ENCODE measurements at regions of chr10 and their contacts with region 1.

Region 1: DNA sequence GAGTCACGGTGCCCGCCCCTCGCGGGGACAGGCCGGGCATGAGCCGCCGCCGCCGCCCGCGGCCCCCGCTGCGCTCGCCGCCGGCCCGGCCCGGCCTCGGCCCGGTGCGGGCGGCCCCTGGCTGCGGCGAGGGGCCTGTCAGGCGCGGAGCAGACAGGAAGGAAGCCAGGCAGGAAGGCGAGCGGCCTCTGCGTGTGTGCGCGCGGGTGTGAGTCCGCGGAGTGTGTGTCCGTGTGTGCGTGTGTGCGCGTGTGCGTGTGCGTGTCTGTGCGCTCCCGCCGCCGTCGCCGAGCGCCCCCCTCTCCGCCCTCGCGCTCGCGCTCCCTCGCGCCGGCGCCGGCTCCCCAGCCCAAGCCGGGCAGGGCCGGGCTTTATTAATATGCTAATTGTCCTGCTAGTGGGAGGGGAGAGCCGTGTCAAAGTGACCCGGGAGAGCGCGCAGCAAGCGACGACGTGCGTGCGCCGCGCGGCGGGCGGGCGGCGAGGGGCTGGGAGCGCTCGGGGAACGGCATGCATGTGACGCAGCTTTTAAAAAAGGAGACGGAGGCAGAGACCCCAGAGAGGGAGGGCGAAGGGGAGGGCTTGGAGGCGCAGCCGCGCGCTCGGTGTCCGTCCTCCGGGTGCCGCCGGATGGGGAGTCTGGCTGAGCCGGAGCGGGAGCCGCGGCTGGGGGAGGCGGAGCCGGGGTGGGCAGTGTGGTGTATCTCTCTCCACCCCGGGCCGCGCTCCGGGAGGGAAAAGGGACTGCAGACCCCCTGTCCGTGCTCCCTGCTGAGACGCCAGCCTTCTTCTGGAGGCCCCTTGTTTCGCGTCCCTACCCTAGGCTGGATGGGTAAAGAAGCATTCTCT is at the start of gene LDB1:
- DNase-seq: peak; percentile 77
- ATAC-seq: peak; percentile 45
- H3K4me3 ChIP-seq: peak within 1 kb of the TSS; percentile 89
- H3K27ac ChIP-seq: peak within 1 kb of the TSS; percentile 91
- H3K4me1 ChIP-seq: peaks cover 30% of the 10 kb centered on the region
- H3K27me3 ChIP-seq: no peaks in the 10 kb centered on the region
- CTCF ChIP-seq: no peak
- POLR2A ChIP-seq: peak; percentile 37; the same call in 1 of the 2 replicates
- RAD21 ChIP-seq: no peak
- total RNA-seq, gene LDB1: 45.3 and 47.9 TPM in 2 replicates

Region 2: DNA sequence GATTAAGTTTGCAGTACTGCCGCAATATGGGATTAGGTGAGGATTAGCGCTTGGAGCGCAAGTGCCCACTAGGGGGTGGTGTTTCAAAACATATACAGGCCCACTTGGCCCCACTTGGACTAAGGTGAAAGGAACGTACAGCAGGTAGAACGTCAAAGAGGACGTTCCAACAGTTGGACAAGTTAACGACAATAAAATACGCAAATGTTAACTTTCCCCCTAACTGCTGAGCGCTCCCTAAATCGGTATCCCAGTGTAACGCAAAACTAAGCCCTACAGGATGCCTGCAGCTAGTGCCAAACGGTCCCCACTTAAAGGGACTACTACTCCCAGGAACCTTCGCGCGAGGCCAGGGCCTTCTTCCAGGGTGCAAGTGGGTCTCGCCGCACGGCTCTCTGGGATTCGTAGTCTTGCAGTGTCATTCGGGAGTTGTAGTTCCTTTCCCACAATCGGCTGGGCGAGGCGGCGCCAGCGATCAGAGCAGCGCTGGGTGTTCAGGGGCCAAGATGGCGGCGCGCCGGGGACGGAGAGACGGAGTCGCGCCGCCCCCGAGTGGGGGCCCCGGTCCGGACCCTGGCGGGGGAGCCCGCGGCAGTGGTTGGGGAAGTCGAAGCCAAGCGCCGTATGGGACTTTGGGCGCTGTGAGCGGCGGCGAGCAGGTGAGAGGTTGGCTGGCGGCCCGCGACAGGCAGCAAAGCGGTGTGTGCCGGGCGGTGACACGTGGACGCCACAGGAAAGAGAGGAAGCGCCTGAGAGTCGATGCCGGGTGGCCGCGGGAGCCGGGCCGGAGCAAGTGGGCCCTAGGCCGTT is 12.4 kb after region 1 on chr10 and contains the start of gene PPRC1:
- CTCF ChIA-PET with region 1: interaction called, 10 read pairs
- POLR2A ChIA-PET with region 1: interaction called, 3 read pairs
- dilution Hi-C with region 1: no loop called
- in situ Hi-C with region 1: no loop called
- intact Hi-C with region 1: no loop called
- DNase-seq: peak; percentile 99
- ATAC-seq: peak; percentile 90
- H3K4me3 ChIP-seq: peak within 1 kb of the TSS; percentile 61
- H3K27ac ChIP-seq: peak within 1 kb of the TSS; percentile 96
- H3K4me1 ChIP-seq: peaks cover 10% of the 10 kb centered on the region
- H3K27me3 ChIP-seq: no peaks in the 10 kb centered on the region
- CTCF ChIP-seq: peak; percentile 80
- POLR2A ChIP-seq: peak; percentile 95
- RAD21 ChIP-seq: peak; percentile 55
- total RNA-seq, gene PPRC1: 11.4 and 11.8 TPM in 2 replicates

Region 3: DNA sequence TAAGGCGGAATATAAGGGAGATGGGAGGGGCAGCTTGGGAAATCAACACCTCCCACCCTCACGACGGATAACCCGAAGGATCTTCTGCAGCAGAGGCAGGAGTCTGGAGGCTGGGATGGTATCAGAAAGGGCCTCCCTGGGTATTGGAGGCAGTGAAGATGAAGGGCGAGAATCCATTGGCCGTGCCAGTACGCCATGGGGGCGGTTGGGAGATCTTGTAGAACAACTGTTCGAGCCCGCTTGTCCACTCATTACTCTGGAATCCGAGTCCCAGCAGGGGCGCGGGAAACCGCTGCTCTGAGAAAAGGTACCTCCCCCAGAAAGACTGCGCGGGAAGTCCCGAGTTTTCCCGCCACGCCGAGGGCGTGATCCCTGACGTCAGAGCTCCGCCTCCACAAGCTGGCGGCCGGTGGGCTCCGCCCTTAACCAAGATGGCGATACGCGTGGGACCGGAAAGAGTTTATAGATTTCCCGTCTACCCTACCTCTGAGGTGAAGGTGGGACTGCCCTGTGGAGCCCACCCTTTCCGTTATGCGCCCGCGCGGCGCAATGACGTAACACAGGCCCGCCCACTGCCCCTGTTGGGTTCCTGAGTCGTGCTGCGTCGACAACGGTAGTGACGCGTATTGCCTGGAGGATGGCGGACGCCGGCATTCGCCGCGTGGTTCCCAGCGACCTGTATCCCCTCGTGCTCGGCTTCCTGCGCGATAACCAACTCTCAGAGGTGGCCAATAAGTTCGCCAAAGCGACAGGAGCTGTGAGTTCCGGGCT is 31.6 kb after region 1 on chr10 and contains the start of gene NOLC1:
- CTCF ChIA-PET with region 1: no interaction called
- POLR2A ChIA-PET with region 1: no interaction called
- dilution Hi-C with region 1: no loop called
- in situ Hi-C with region 1: no loop called
- intact Hi-C with region 1: loop called (anchors 2 kb)
- DNase-seq: peak; percentile 99
- ATAC-seq: peak; percentile 96
- H3K4me3 ChIP-seq: peak within 1 kb of the TSS; percentile 64
- H3K27ac ChIP-seq: peak within 1 kb of the TSS; percentile 74
- H3K4me1 ChIP-seq: peaks cover 6% of the 10 kb centered on the region; the same call in 1 of the 2 replicates
- H3K27me3 ChIP-seq: no peaks in the 10 kb centered on the region
- CTCF ChIP-seq: no peak
- POLR2A ChIP-seq: peak; percentile 96
- RAD21 ChIP-seq: no peak
- total RNA-seq, gene NOLC1: 43.2 and 60.5 TPM in 2 replicates

Region 4: GRCh38 chr10:102185811-102186527 is 65.6 kb after region 1 on chr10:
- CTCF ChIA-PET with region 1: no interaction called
- POLR2A ChIA-PET with region 1: no interaction called
- dilution Hi-C with region 1: no loop called
- in situ Hi-C with region 1: no loop called
- intact Hi-C with region 1: no loop called
- DNase-seq: no peak
- ATAC-seq: no peak
- H3K4me3 ChIP-seq: no peak overlapping the region
- H3K27ac ChIP-seq: no peak overlapping the region
- H3K4me1 ChIP-seq: no peaks in the 10 kb centered on the region
- H3K27me3 ChIP-seq: peaks cover 7% of the 10 kb centered on the region
- CTCF ChIP-seq: no peak
- POLR2A ChIP-seq: no peak
- RAD21 ChIP-seq: no peak

Measured in IMR-90 (cell line).